ENCODE measurements at regions of chr15 and their contacts with region 1.

Region 1: GRCh38 chr15:88897456-88898194 is 2.3 kb upstream of the HAPLN3 start:
- DNase-seq: peak; percentile 78 to 79 (median 78)
- H3K4me3 ChIP-seq: no peak overlapping the region
- H3K4me3 Mint-ChIP-seq: peak overlapping the region; percentile 20 to 80 (median 58)
- H3K27ac ChIP-seq: no peak overlapping the region
- H3K27ac Mint-ChIP-seq: peak overlapping the region; percentile 14 to 93 (median 67)
- H3K4me1 ChIP-seq: peaks cover 43% of the 10 kb centered on the region
- H3K4me1 Mint-ChIP-seq: peaks cover 28 to 58% (median 45%) of the 10 kb centered on the region in 4 donors
- H3K27me3 ChIP-seq: no peaks in the 10 kb centered on the region
- H3K27me3 Mint-ChIP-seq: no peaks in the 10 kb centered on the region

Region 2: DNA sequence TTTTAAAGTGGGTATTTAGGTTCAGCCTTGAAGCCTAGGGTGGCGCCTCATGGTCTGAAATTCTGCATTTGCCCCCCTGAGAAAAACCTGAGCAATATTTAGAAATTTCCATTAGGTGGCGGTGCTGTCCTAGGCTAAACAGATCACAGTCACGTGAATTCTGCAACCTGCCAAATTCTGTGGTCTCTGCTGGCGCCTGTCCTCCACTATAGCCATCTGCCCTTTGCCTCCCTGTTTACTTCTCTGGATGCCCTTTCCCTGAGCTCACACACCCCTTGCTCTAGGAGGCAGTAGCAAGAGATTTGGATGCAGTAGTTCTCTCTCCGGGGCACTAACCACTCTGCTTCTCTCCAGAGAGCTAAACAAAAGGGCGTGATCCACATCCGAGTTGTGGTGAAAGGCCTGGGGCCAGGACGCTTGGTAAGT is 421.0 kb before region 1 on chr15:
- CTCF ChIA-PET with region 1: no interaction called
- POLR2A ChIA-PET with region 1: no interaction called
- intact Hi-C with region 1: no loop called
- DNase-seq: peak in 4 of 5 donors; percentile 17 to 28 (median 26)
- H3K4me3 ChIP-seq: no peak overlapping the region
- H3K4me3 Mint-ChIP-seq: no peak overlapping the region
- H3K27ac ChIP-seq: no peak overlapping the region
- H3K27ac Mint-ChIP-seq: peak overlapping the region in 2 of 7 donors; percentile 35 to 42
- H3K4me1 ChIP-seq: no peaks in the 10 kb centered on the region
- H3K4me1 Mint-ChIP-seq: peaks cover 0 to 2% (median 1%) of the 10 kb centered on the region in 4 donors
- H3K27me3 ChIP-seq: no peaks in the 10 kb centered on the region
- H3K27me3 Mint-ChIP-seq: no peaks in the 10 kb centered on the region

Region 3: DNA sequence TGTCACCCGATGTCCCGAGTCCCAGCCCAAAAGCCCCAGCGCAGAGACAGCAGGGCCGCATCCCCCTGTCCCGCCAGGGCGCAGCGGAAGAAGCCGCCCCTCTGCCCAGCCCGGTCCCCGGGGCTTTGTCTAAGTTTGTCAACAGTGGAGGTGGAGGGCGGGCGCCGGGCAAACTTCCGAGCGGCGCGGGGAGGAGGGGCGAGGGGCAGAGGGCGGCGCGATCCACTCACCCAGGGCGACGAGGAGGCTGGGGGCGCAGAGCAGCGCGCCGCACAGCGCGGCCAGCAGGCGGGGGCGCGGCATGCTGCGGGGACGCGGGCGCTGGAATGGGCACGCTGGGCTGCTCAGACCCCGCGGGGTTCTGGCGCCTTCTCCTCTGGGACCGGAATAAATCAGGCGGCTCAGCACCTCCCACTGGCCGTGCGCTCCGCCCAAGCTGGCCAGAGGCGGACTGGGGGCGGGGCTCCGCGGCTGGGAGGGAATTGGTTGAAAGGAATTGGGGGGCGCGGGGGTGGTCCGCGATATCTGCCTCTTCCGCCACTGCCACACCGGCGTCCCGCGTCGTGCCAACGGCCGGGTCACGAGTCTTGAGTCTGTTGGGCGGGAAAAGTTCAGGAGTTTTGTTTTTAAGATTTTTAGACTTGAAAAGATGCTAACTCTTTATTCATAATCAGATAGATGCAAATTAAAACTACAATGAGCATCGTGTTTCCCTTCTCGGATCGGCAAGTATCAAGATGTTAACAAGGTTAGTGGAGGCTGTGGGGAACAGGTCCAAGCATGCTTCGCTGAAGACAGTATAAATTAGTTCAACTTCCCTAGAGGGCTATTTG is 15.6 kb after region 1 on chr15 and contains the start of gene MFGE8:
- CTCF ChIA-PET with region 1: interaction called, 171 read pairs
- POLR2A ChIA-PET with region 1: interaction called, 6 read pairs
- intact Hi-C with region 1: loop called (anchors 2 kb)
- DNase-seq: peak; percentile 67 to 75 (median 71)
- H3K4me3 ChIP-seq: peak within 1 kb of the TSS; percentile 75 to 76
- H3K4me3 Mint-ChIP-seq: peak within 1 kb of the TSS; percentile 90 to 98 (median 95)
- H3K27ac ChIP-seq: peak within 1 kb of the TSS; percentile 60
- H3K27ac Mint-ChIP-seq: peak within 1 kb of the TSS; percentile 72 to 94 (median 88)
- H3K4me1 ChIP-seq: peaks cover 13% of the 10 kb centered on the region
- H3K4me1 Mint-ChIP-seq: peaks cover 12 to 41% (median 22%) of the 10 kb centered on the region in 4 donors
- H3K27me3 ChIP-seq: no peaks in the 10 kb centered on the region
- H3K27me3 Mint-ChIP-seq: peaks cover 2 to 6% of the 10 kb centered on the region in 2 donors
- total RNA-seq, gene MFGE8: 92.8 to 102 TPM

Region 4: DNA sequence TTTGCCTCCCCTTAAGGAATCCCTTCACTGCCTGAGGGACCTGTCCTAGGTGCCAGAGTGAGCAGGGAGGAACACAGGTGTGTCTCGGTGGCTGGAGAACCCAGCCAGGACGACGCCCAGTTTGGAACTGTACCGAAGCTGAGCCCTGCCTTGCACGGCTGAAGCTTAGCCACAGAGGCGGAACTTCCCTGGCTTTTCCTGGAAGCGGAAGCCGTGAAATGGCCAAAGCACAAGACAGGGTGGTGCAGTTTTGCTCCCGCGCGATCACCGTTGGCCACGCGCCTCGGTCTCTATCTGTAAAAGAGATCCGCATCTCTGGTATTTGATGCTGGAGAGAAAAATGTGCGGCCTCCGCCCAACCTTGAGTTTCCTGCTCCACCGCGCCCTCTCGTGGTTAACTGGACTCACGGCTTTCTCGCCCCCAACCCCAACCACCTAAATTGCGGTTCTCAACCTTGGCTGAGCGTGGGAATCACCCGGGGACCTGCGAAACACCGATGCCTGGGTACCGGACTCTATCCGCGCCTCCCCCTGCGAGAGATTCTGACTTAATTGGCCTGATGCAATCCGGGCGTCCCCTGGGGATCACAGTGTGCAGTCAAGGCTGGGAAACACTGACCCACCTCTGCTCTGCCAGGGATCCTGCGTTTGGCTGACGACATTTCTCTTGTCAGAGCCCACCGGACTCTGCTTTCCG is 119.9 kb after region 1 on chr15:
- CTCF ChIA-PET with region 1: interaction called, 106 read pairs
- POLR2A ChIA-PET with region 1: interaction called, 7 read pairs
- intact Hi-C with region 1: loop called (anchors 1 kb)
- DNase-seq: peak; percentile 80 to 84 (median 83)
- H3K4me3 ChIP-seq: peak overlapping the region in 1 of 2 donors; percentile 21
- H3K4me3 Mint-ChIP-seq: peak overlapping the region; percentile 17 to 75 (median 71)
- H3K27ac ChIP-seq: no peak overlapping the region
- H3K27ac Mint-ChIP-seq: peak overlapping the region; percentile 38 to 89 (median 72)
- H3K4me1 ChIP-seq: peaks cover 14% of the 10 kb centered on the region
- H3K4me1 Mint-ChIP-seq: peaks cover 13 to 19% (median 14%) of the 10 kb centered on the region in 4 donors
- H3K27me3 ChIP-seq: no peaks in the 10 kb centered on the region
- H3K27me3 Mint-ChIP-seq: peaks cover 0 to 1% of the 10 kb centered on the region in 2 donors

Region 5: DNA sequence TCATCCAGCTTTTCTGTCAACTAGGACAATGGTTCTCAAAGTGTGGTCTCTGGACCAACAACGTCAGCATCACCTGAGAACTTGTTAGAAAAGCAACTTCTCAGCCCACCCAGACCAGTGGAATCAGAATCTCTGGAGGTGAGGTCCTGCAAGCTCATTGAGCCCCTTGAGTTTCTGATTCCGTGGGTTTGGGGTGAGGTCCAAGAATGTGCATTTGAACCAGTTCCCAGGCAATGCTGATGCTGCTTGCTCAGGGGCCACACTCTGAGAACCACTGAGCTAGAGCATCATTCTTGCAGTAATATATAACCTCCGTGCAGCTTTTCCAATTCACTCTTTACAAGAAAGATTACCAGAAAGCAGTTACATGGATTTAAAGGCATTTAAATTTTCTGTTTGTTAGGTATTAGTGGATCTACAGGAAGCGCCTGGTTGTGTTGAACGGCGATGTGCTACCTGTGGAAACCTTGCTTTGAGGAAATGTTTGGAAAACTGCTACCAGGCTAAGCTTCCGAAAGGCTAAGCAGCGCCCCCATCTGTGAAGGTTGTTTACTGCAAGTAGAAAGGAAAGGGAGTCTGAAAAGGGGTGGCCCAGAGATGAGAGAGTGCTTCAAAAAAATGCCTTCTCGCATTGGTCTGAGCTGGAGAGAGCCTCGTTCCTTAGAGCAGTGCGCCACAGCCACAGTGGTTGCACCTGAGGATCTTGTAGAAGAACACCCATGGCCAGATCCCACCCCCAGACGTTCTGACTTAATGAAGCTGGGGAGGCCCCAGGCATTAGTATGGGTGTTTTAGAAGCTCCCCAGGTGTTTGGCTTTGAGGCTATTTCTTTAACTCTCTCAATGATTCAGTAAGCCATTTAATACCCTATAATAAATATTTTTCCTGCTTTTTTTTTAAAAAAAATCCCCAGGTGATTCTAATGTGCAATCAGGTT is 273.8 kb after region 1 on chr15:
- CTCF ChIA-PET with region 1: interaction called, 18 read pairs
- POLR2A ChIA-PET with region 1: no interaction called
- intact Hi-C with region 1: no loop called
- DNase-seq: peak in 2 of 5 donors; percentile 22 to 24
- H3K4me3 ChIP-seq: no peak overlapping the region
- H3K4me3 Mint-ChIP-seq: no peak overlapping the region
- H3K27ac ChIP-seq: no peak overlapping the region
- H3K27ac Mint-ChIP-seq: no peak overlapping the region
- H3K4me1 ChIP-seq: peaks cover 12% of the 10 kb centered on the region
- H3K4me1 Mint-ChIP-seq: peaks cover 4 to 10% (median 6%) of the 10 kb centered on the region in 4 donors
- H3K27me3 ChIP-seq: no peaks in the 10 kb centered on the region
- H3K27me3 Mint-ChIP-seq: no peaks in the 10 kb centered on the region

Region 6: DNA sequence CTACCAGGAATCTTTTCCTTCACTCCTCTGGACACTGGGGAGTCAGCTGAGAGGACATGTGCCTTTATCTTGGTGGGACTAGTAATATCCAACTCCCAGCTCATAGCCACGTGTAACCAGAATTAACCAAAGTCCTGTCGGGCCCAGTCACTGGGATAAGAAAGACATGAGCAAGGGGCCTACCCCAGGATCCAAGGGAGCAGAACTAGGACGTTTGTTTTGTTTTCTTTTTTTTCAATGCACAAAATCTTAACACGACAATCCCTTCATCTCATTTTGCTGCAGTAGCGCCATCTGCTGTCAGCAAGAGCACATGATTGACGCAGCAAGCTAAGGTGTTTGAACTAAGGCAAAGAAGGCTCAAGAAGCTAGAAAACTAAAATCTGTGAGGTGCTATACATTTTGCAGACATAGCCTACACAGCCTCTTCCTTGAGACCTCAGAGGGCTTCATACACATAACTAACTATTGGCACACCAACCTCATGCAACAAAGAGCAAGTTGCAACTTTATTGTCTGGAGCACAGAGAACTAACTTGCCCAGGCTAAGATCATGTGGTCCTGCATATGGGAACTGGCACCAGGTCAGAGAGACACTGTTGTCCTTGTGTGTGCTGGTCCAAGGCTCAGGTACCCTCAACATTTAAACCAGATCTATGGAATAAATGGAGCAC is 280.1 kb after region 1 on chr15:
- CTCF ChIA-PET with region 1: interaction called, 14 read pairs
- POLR2A ChIA-PET with region 1: no interaction called
- intact Hi-C with region 1: loop called (anchors 1 kb)
- DNase-seq: peak; percentile 45 to 64 (median 55)
- H3K4me3 ChIP-seq: no peak overlapping the region
- H3K4me3 Mint-ChIP-seq: no peak overlapping the region
- H3K27ac ChIP-seq: no peak overlapping the region
- H3K27ac Mint-ChIP-seq: peak overlapping the region in 4 of 7 donors; percentile 20 to 48 (median 30)
- H3K4me1 ChIP-seq: no peaks in the 10 kb centered on the region
- H3K4me1 Mint-ChIP-seq: peaks cover 4 to 8% (median 7%) of the 10 kb centered on the region in 4 donors
- H3K27me3 ChIP-seq: no peaks in the 10 kb centered on the region
- H3K27me3 Mint-ChIP-seq: no peaks in the 10 kb centered on the region

Region 7: DNA sequence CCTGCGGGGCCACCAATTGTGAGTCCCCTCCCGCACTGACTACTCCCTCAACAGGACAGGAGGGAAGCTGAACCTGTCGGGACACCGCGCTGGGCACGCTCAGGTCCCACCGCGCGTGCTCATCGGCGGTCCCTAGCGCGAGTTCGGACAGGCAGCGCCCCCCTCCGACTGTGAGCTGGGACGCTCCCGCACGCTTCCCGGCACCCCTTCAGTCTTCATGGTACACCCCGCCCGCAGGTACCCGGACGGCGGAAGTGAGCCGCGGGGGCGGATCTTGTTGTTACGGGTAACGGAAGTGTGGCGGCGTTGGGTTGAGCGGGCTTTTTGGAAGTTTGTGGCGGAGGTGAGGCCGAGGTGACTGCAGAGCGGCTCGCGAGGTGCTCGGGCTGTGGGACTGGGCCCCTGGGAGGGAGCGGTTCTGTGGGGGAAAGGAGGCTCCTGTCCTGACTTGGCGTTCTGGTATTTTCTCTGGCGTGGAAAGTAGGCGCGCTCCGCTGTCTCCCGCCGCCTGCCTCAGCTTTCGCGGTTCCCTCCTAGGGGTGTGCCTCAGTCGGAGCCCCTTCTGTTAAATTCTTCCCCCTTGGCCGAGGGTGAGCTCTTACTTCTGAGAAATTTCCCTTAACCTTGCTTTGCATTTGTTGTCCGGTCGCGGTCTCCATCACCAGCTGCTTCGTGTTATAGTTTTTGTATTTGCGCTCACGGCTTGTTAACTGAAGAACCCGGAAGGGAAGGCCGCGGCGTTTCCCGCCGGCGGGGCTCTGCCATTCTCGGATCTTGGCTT is 346.3 kb after region 1 on chr15 and contains the start of gene FANCI:
- CTCF ChIA-PET with region 1: interaction called, 3 read pairs
- POLR2A ChIA-PET with region 1: no interaction called
- intact Hi-C with region 1: loop called (anchors 1 kb)
- DNase-seq: peak; percentile 93 to 96 (median 94)
- H3K4me3 ChIP-seq: peak within 1 kb of the TSS; percentile 95
- H3K4me3 Mint-ChIP-seq: peak within 1 kb of the TSS; percentile 91 to 98 (median 94)
- H3K27ac ChIP-seq: peak within 1 kb of the TSS; percentile 43
- H3K27ac Mint-ChIP-seq: peak within 1 kb of the TSS; percentile 80 to 92 (median 89)
- H3K4me1 ChIP-seq: peaks cover 14% of the 10 kb centered on the region
- H3K4me1 Mint-ChIP-seq: peaks cover 20 to 40% (median 30%) of the 10 kb centered on the region in 4 donors
- H3K27me3 ChIP-seq: no peaks in the 10 kb centered on the region
- H3K27me3 Mint-ChIP-seq: no peaks in the 10 kb centered on the region
- total RNA-seq, gene FANCI: 10.9 to 19.0 TPM